SK-N-SH (cell line): ENCODE measurements at regions of chr1 and their contacts with region 1.

Region 1: GRCh38 chr1:42924082-42924850 is 34.4 kb downstream of the SLC2A1 start:
- DNase-seq: peak; percentile 96
- H3K4me3 ChIP-seq: peak overlapping the region; percentile 66 to 73
- H3K27ac ChIP-seq: peak overlapping the region; percentile 64 to 82
- H3K4me1 ChIP-seq: peaks cover 0 to 11% of the 10 kb centered on the region in 2 experiments; a peak in 3 of 4 replicates
- H3K27me3 ChIP-seq: no peaks in the 10 kb centered on the region
- CTCF ChIP-seq: peak; percentile 29; the same call in 1 of the 2 replicates
- EP300 ChIP-seq: no peak
- RAD21 ChIP-seq: no peak

Region 2: GRCh38 chr1:42913426-42914091 is 10.7 kb before region 1 on chr1:
- CTCF ChIA-PET with region 1: interaction called, 60 read pairs
- POLR2A ChIA-PET with region 1: no interaction called
- DNase-seq: peak; percentile 67
- H3K4me3 ChIP-seq: no peak overlapping the region
- H3K27ac ChIP-seq: no peak overlapping the region
- H3K4me1 ChIP-seq: no peaks in the 10 kb centered on the region
- H3K27me3 ChIP-seq: no peaks in the 10 kb centered on the region
- CTCF ChIP-seq: peak; percentile 77
- EP300 ChIP-seq: no peak
- RAD21 ChIP-seq: peak; percentile 89

Region 3: GRCh38 chr1:42979896-42980800 is 55.9 kb after region 1 on chr1:
- CTCF ChIA-PET with region 1: interaction called, 10 read pairs
- POLR2A ChIA-PET with region 1: interaction called, 5 read pairs
- DNase-seq: no peak
- H3K4me3 ChIP-seq: no peak overlapping the region
- H3K27ac ChIP-seq: peak overlapping the region in 1 of 2 experiments; percentile 98; a peak in 2 of 4 replicates
- H3K4me1 ChIP-seq: peaks cover 3 to 49% of the 10 kb centered on the region in 2 experiments; a peak in 3 of 4 replicates
- H3K27me3 ChIP-seq: no peaks in the 10 kb centered on the region
- CTCF ChIP-seq: no peak
- EP300 ChIP-seq: no peak
- RAD21 ChIP-seq: no peak

Region 4: DNA sequence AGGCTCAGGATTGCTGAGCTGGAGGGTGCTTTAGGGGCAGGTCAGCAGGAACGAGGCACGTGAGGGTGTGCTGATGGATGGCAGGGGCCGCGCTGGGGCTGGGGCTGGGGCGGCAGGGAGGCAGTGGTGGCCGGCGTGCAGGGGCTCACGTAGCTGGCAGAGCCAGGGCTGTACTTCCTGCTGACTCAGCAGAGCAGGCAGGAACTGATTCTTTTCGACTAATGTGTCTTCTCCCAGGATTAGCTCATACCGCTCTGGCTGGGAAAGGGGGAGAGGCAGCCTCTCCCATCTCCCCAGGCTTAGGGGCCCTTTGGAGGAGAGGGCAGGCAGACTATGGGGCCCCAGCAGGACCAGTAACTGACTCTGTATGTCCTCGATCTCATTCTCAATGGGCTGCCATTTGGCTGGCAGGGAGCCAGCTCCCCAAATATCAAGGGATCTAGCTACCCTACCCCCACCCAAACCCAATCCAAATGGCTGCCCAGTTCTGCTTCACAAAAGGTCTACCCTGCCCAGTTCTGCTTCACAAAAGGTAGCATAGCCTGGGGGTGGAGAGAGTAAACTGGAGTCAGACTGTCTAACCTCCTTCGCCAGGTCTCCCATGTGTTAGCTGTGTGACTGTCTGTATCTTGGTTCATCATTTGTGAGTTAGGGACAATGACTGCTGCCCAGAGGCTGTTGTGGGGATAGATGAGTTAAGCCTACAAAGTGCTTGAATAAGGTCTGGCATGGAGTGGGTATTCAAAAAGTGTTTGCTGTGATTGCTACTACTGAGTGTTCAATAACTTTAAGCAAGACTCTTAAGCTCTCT is 134.5 kb after region 1 on chr1:
- CTCF ChIA-PET with region 1: interaction called, 33 read pairs
- POLR2A ChIA-PET with region 1: no interaction called
- DNase-seq: peak; percentile 55
- H3K4me3 ChIP-seq: no peak overlapping the region
- H3K27ac ChIP-seq: peak overlapping the region in 1 of 2 experiments; percentile 74; a peak in 2 of 4 replicates
- H3K4me1 ChIP-seq: peaks cover 0 to 22% of the 10 kb centered on the region in 2 experiments; a peak in 1 of 4 replicates
- H3K27me3 ChIP-seq: no peaks in the 10 kb centered on the region
- CTCF ChIP-seq: no peak
- EP300 ChIP-seq: no peak
- RAD21 ChIP-seq: no peak; the same call in 1 of the 2 replicates